HAP-1 (cell line): ENCODE measurements at regions of chr12 and their contacts with region 1.

Region 1: GRCh38 chr12:7207866-7208625 is 18.6 kb downstream of the PEX5 start:
- DNase-seq: no peak
- H3K4me3 ChIP-seq: no peak overlapping the region
- H3K4me1 ChIP-seq: no peaks in the 10 kb centered on the region
- H3K27me3 ChIP-seq: no peaks in the 10 kb centered on the region

Region 2: GRCh38 chr12:6752921-6753771 is 454.9 kb before region 1 on chr12 and contains the start of gene MLF2:
- in situ Hi-C with region 1: no loop called
- DNase-seq: peak; percentile 96 to 99
- H3K4me3 ChIP-seq: peak within 1 kb of the TSS; percentile 100
- H3K4me1 ChIP-seq: peaks cover 10% of the 10 kb centered on the region
- H3K27me3 ChIP-seq: no peaks in the 10 kb centered on the region

Region 3: DNA sequence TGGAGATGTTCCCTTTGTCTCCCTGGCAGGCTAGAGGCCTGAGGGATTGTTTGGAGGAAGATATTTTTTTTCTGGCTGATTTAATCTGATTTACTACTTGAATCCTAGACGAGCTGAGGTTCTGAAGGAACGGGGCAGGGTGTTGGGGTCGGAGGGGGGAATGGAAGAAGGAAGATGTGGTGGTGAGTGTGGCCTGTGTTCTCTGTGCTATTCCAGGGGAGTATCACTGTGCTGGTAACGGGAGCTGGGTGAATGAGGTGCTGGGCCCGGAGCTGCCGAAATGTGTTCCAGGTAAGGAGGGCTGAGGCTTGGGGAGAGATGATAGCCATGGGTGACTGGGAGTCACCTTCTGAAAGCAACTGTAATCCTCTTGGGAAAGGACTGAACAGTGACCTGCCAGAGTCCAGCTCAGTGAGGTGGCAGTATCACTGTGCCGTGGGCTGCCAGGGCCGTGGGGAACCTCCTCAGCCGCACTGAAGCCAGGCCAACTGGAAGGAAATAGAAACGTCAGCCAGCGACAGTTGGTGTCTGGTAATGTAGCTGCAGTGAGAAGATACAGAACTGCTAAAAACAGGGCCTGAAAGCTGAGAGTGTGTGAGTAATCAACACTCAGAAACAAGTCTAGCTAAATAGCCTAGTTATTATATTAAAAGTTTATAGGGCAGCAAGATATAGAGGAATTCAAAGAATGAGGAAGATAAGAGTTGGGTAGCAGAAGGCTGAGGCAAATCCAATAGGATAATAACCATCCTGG is 139.6 kb before region 1 on chr12:
- in situ Hi-C with region 1: no loop called
- DNase-seq: no peak
- H3K4me3 ChIP-seq: no peak overlapping the region
- H3K4me1 ChIP-seq: no peaks in the 10 kb centered on the region
- H3K27me3 ChIP-seq: no peaks in the 10 kb centered on the region; the same call in 1 of the 2 replicates

Region 4: GRCh38 chr12:7645394-7646177 is 437.5 kb after region 1 on chr12:
- in situ Hi-C with region 1: loop called (anchors 10 kb)
- DNase-seq: peak; percentile 16 to 52
- H3K4me3 ChIP-seq: no peak overlapping the region
- H3K4me1 ChIP-seq: no peaks in the 10 kb centered on the region
- H3K27me3 ChIP-seq: no peaks in the 10 kb centered on the region